ENCODE measurements at regions of chr2 and their contacts with region 1.

Region 1: GRCh38 chr2:207769597-207770486 is at the start of gene FZD5:
- DNase-seq: peak; percentile 95

Region 2: GRCh38 chr2:208025037-208025813 is 255.4 kb after region 1 on chr2 and contains the start of gene PLEKHM3:
- in situ Hi-C with region 1: loop called (anchors 25 kb)
- DNase-seq: peak; percentile 91